Sciatic nerve (tissue), 2 donors: ENCODE measurements at regions of chr6 and their contacts with region 1.

Region 1: DNA sequence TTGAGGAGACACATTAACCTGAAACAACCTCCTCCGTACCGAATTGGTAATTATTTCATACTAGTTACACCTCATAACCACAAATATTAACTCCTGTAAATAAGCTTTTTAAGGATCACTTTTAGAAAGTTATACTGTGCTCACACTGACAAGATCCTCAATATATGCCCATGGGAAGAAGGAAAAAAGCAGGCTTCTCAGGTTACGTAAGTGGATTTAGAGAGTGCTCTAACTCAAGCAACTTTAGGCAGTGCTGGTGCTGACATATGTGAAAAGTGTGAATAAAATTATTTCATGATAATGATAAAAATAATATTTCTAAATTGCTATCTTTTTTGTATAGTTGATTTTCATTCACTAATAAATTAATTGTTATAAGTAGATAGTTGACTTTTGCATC is 76.1 kb downstream of the PRKN start:
- DNase-seq: no peak
- ATAC-seq: no peak

Region 2: DNA sequence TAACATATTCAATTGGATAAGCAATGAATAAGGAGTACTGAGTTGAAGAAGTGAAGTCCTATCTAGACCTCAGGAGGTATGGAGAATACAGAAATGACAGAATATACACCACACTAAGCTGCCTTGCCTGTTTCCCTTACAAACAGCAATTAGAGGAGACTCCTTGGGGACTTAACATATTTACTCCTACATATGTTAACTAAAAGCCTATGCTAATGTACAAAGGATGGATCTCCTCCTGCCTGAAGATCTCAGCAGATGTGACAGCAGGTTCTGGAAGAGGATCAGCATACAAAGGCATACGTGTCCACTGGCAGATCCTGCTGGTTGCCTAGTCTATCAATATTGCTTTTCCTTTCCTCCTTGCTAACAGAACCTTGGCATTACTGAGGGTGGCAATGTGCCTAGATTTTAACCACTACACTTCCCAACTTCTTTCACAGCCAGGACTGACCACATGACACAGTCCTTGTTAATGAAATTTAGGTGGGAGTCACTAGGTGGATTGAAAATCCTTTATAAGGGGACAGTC is 46.4 kb after region 1 on chr6:
- intact Hi-C with region 1: no loop called
- DNase-seq: no peak
- ATAC-seq: no peak

Region 3: DNA sequence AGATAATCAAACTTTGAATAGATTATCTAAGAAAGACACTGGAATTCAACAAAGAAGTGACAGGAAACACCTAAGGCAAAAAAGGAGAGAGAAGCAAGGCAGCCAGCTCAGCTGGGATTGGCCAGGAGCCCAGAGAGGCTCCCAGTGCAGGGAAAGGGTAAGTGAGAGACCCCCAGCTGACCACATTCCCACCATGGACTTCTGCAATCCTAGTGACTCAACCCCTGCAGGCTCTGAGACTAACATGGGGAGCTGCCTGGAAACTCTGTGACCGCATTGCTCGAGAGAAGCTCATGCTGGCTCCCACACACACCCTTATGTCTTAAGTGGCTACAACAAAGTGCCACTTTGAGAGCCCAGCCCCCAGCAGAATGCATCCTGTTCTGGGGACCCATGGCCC is 291.4 kb after region 1 on chr6:
- intact Hi-C with region 1: no loop called
- DNase-seq: no peak
- ATAC-seq: no peak

Region 4: GRCh38 chr6:164563924-164564323 is 1912.4 kb after region 1 on chr6:
- intact Hi-C with region 1: loop called (anchors 5 kb)
- DNase-seq: no peak
- ATAC-seq: no peak